ENCODE measurements at regions of chr10 and their contacts with region 1.

Region 1: GRCh38 chr10:45514291-45515270 is 140.6 kb downstream of the ALOX5 start:
- DNase-seq: peak; percentile 16 to 79 (median 68)
- H3K4me3 ChIP-seq: peak overlapping the region; percentile 0 to 59 (median 30)
- H3K27ac ChIP-seq: peak overlapping the region in 29 of 59 donors; percentile 2 to 73 (median 39)
- H3K27me3 ChIP-seq: no peaks in the 10 kb centered on the region
- CTCF ChIP-seq: no peak

Region 2: DNA sequence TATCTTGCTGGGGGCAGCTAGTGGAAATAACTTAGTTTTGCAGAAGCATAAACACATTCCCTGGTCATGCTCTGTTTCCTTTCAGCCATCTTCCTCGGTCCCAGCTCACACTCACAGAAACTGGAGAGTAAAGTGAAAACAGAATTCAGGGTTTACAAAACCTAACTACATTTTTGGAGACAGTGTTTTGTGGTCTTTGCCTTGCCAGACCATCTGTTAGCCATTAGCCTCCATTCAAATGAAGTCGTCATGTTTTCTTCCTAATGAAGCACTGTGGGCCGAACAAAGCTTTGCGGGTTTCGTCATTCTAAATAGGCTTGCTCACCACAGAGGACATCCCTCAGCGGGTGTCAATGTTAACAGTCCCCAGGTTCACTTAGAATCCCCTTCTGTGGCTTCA is 818.1 kb before region 1 on chr10:
- intact Hi-C with region 1: no loop called
- DNase-seq: no peak
- H3K4me3 ChIP-seq: no peak overlapping the region
- H3K27ac ChIP-seq: no peak overlapping the region
- H3K27me3 ChIP-seq: peaks cover 0 to 7% (median 0%) of the 10 kb centered on the region in 45 donors
- CTCF ChIP-seq: no peak

Region 3: DNA sequence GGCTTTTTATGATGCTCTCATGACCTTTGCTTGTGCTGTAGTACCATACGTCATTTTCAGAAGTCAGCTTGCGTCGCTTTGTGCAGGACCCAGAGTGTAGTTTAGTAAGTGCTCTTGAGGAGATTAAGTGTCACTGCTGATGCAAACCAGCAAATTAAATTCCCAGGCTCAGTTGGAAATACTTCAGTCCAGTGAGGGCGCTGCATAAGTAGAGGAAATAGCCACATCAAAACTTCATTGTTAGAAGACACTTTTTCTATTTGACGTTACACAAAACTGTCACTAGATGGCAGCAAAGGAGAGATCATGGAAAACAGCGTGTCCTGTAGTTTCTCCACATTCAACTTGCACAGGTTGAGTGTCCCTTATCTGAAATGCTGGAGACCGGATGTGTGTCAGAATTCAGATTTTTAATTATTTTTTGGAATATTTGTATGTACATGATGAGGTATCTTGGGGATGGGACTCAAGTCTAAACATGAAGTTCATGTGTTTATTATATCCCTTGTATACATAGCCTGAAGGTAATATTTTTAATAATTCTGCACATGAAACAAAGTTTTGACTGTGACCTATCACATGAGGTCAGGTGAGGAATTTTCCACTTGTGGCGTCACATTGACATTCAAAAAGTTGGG is 505.9 kb before region 1 on chr10:
- intact Hi-C with region 1: no loop called
- DNase-seq: peak in 2 of 10 donors; percentile 26 to 45
- H3K4me3 ChIP-seq: peak overlapping the region in 3 of 59 donors; percentile 2 to 26 (median 20)
- H3K27ac ChIP-seq: no peak overlapping the region
- H3K27me3 ChIP-seq: no peaks in the 10 kb centered on the region
- CTCF ChIP-seq: peak; percentile 64 to 98 (median 93)

Region 4: DNA sequence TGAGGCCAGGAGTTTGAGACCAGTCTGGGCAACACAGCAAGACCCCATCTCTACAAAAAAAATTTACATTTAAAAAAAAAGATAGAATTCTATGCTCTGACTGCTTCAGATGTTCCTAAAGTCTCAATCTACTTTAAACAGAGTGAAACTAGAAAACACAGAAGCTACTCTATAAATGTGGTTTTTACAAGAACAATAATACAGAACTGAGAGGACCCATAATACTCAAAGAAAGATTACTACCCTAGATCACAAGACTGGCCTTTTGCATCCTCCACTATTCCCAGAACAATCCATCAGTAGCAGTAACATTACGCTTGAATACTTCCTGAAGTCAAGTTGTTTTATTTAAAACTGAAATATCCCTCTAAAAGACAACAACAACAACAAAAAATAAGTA is 38.6 kb after region 1 on chr10:
- intact Hi-C with region 1: loop called in 1 of 2 experiments (anchors 5 kb)
- DNase-seq: no peak
- H3K4me3 ChIP-seq: no peak overlapping the region
- H3K27ac ChIP-seq: peak overlapping the region in 25 of 59 donors; percentile 0 to 81 (median 48)
- H3K27me3 ChIP-seq: no peaks in the 10 kb centered on the region
- CTCF ChIP-seq: no peak

Region 5: GRCh38 chr10:45580371-45581215 is 66.0 kb after region 1 on chr10:
- intact Hi-C with region 1: no loop called
- DNase-seq: no peak
- H3K4me3 ChIP-seq: peak overlapping the region in 16 of 59 donors; percentile 3 to 44 (median 14)
- H3K27ac ChIP-seq: no peak overlapping the region
- H3K27me3 ChIP-seq: no peaks in the 10 kb centered on the region
- CTCF ChIP-seq: no peak

Measured in dorsolateral prefrontal cortex (tissue), 120 donors.